A549 (cell line): ENCODE measurements at regions of chr17 and their contacts with region 1.

Region 1: GRCh38 chr17:7716901-7717755 is at the start of gene DNAH2:
- DNase-seq: peak; percentile 93 to 94
- ATAC-seq: peak; percentile 85 to 94
- H3K4me3 ChIP-seq: peak within 1 kb of the TSS; percentile 52
- H3K27ac ChIP-seq: peak within 1 kb of the TSS; percentile 79 to 89
- H3K4me1 ChIP-seq: peaks cover 21% of the 10 kb centered on the region
- CTCF ChIP-seq: peak; percentile 78
- EP300 ChIP-seq: no peak
- POLR2A ChIP-seq: peak; percentile 62
- RAD21 ChIP-seq: peak; percentile 68 to 75
- polyA plus RNA-seq, gene DNAH2: 0.08 TPM in 2 replicates

Region 2: GRCh38 chr17:7589204-7589868 is 127.8 kb before region 1 on chr17:
- CTCF ChIA-PET with region 1: interaction called, 13 read pairs
- POLR2A ChIA-PET with region 1: interaction called, 6 read pairs
- DNase-seq: peak in 1 of 2 experiments; percentile 72
- ATAC-seq: peak; percentile 22 to 65; a peak in 3 of 6 replicates
- H3K4me3 ChIP-seq: no peak overlapping the region
- H3K27ac ChIP-seq: peak overlapping the region in 1 of 2 experiments; percentile 78; a peak in 2 of 6 replicates
- H3K4me1 ChIP-seq: peaks cover 36% of the 10 kb centered on the region
- CTCF ChIP-seq: peak; percentile 46
- EP300 ChIP-seq: no peak
- POLR2A ChIP-seq: no peak
- RAD21 ChIP-seq: peak; percentile 44 to 45; a peak in 3 of 5 replicates

Region 3: DNA sequence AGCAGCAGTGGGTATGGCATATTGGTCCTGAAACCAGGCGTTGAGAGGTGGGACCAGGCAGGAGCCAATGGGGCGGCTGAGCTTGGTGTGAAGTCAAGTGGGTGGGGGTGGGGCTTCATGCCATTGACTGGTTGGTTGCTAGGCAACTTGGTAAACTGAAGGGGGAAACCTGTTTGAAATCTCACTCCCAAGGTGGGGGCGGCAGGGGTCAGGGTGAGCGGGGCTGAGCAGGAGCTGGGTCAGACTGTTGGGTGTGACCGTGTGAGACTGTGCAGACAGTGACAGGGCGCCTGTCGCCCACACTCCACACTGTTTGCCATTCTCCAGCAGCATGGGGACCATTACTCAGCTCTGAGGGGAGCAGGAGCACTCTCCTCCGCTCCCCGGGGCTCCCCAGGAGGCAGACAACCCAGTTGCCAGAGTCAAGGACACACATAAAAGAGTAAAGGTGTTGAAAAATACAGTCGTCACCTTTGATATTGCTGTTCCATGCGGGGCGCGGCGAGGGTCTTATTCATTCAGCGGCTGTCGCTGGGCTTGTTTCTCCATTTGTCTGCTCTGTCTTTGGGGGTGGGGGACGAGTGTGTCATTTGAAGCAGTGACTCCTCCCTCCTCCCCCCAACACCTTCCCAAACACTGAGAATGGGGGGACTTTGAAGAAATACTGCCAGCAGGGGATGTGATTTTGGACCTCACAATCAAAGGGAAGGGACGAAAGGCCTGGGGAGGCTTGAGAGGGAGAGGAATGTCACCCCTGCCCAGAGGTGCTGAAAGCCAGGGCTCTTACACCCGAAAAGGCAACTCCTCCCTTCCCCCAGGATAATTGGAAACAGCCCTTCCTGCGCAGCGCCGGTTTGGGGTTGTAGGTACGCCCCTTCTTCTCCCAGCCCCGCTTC is 13.3 kb before region 1 on chr17:
- CTCF ChIA-PET with region 1: interaction called, 65 read pairs
- POLR2A ChIA-PET with region 1: interaction called, 15 read pairs
- DNase-seq: peak; percentile 34 to 77
- ATAC-seq: peak in 1 of 2 experiments; percentile 55; a peak in 3 of 6 replicates
- H3K4me3 ChIP-seq: no peak overlapping the region; the same call in 2 of the 3 replicates
- H3K27ac ChIP-seq: no peak overlapping the region
- H3K4me1 ChIP-seq: peaks cover 13% of the 10 kb centered on the region; the same call in 2 of the 3 replicates
- CTCF ChIP-seq: no peak
- EP300 ChIP-seq: no peak
- POLR2A ChIP-seq: no peak
- RAD21 ChIP-seq: no peak

Region 4: DNA sequence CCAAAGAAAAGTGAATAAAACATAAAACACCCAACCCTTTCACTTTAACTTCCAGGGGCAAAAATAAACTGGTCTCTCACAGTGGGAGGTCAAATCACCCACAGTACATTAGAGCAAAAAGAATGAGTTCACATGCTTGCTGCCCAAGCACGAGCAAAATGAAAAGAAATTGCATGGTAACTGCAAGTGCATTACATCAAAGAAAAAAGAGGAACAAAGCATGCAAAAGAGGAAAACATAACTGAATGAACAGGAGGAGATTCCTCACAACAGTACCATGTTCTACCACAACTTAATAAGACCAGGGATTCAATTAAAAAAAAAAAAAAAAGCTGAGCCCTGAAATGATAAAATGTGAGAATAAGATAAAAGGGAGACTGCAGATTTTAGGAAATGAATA is 12.7 kb after region 1 on chr17:
- CTCF ChIA-PET with region 1: interaction called, 20 read pairs
- POLR2A ChIA-PET with region 1: no interaction called
- DNase-seq: no peak
- ATAC-seq: no peak
- H3K4me3 ChIP-seq: no peak overlapping the region
- H3K27ac ChIP-seq: no peak overlapping the region
- H3K4me1 ChIP-seq: no peaks in the 10 kb centered on the region
- CTCF ChIP-seq: no peak
- EP300 ChIP-seq: no peak
- POLR2A ChIP-seq: no peak
- RAD21 ChIP-seq: no peak

Region 5: DNA sequence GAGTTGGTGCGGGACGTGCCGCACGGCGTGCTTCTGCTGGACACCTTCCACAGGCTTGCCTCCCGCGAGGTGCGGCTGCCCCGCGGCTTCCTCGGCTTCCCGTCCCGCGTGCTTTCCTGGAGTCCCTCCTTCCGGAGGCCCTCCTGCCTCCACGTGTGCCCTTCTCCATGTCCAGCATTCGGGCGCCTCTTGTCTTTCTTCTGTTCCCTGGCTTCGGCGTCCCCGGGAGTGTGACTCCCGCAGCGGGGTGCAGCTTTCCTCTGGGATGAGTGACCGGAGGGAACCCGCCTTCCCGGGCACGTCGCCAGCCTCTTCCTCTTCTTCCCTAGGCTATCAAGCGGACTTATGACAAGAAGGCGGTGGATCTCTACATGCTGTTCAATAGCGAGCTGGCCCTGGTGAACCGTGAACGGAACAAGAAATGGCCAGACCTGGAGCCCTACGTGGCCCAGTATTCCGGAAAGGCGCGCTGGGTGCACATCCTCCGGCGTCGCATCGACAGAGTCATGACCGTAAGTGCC is 23.4 kb after region 1 on chr17:
- CTCF ChIA-PET with region 1: interaction called, 17 read pairs
- POLR2A ChIA-PET with region 1: no interaction called
- DNase-seq: no peak
- ATAC-seq: no peak
- H3K4me3 ChIP-seq: no peak overlapping the region
- H3K27ac ChIP-seq: no peak overlapping the region
- H3K4me1 ChIP-seq: peaks cover 3% of the 10 kb centered on the region
- CTCF ChIP-seq: no peak
- EP300 ChIP-seq: no peak
- POLR2A ChIP-seq: no peak
- RAD21 ChIP-seq: no peak

Region 6: GRCh38 chr17:7809086-7809790 is 92.1 kb after region 1 on chr17:
- CTCF ChIA-PET with region 1: no interaction called
- POLR2A ChIA-PET with region 1: interaction called, 14 read pairs
- DNase-seq: no peak
- ATAC-seq: peak; percentile 32 to 38; a peak in 3 of 6 replicates
- H3K4me3 ChIP-seq: no peak overlapping the region
- H3K27ac ChIP-seq: peak overlapping the region in 1 of 2 experiments; percentile 47; a peak in 1 of 6 replicates
- H3K4me1 ChIP-seq: peaks cover 11% of the 10 kb centered on the region
- CTCF ChIP-seq: no peak
- EP300 ChIP-seq: no peak
- POLR2A ChIP-seq: no peak
- RAD21 ChIP-seq: no peak

Region 7: GRCh38 chr17:8016632-8017478 is 299.7 kb after region 1 on chr17:
- CTCF ChIA-PET with region 1: no interaction called
- POLR2A ChIA-PET with region 1: no interaction called
- DNase-seq: peak; percentile 62 to 66
- ATAC-seq: peak; percentile 76 to 92
- H3K4me3 ChIP-seq: peak overlapping the region; percentile 47
- H3K27ac ChIP-seq: peak overlapping the region; percentile 62 to 70; a peak in 5 of 6 replicates
- H3K4me1 ChIP-seq: peaks cover 5% of the 10 kb centered on the region; the same call in 1 of the 3 replicates
- CTCF ChIP-seq: peak; percentile 89
- EP300 ChIP-seq: no peak
- POLR2A ChIP-seq: no peak
- RAD21 ChIP-seq: peak; percentile 72 to 77